Esophagus muscularis mucosa (tissue), 4 donors: ENCODE measurements at regions of chr6 and their contacts with region 1.

Region 1: DNA sequence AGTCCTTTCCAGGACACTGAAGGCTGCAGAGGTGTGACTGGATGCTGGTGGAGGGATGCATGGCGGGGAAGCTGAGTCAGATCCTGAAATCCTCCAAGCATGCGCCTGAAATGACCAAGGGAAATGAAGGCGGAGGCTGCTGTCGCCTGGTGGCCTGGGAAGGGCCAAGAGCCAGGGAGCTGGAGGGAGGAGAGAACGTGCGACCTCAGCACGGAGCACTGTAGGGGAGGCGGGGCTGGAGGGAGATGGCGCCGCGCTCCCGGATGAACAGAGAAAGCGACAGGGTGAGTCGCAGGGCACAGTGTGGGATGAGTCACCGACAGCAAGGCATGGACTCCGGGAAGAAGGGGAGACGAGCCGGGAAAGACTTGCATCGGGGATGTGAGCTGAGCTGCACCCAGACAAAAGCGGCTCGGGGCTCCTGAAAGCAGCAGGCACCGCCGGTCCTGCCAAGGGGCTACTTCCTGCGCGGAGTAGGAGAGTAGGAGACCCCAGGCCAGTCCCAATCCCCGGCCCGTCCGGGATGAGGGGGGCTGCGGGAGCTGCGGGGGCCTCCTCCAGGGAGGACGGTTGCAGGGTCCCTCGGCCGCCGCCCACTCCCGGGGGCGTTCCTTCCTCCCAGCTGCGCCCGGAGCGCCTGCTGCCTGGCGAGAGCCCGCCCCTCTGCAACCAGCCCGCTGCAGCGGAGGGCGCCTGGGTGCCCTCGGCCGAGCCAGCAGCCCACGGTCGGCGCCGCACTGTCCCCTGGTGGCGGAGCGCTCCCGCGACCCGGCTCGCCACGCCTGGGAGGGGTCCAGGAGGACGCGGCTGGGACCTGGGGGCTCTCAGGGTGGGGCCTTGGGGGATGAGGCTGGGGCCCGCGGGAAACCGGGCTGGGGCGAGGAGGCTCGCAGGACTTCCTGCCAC is 11.0 kb upstream of the NQO2 start:
- DNase-seq: peak; percentile 98
- H3K4me3 ChIP-seq: peak overlapping the region; percentile 76 to 90 (median 86)
- H3K27ac ChIP-seq: peak overlapping the region; percentile 91 to 99 (median 94)
- H3K4me1 ChIP-seq: peaks cover 19 to 40% (median 30%) of the 10 kb centered on the region in 4 donors
- H3K27me3 ChIP-seq: no peaks in the 10 kb centered on the region
- CTCF ChIP-seq: peak; percentile 94 to 99 (median 95)
- EP300 ChIP-seq: no peak
- POLR2A ChIP-seq: peak; percentile 44

Region 2: DNA sequence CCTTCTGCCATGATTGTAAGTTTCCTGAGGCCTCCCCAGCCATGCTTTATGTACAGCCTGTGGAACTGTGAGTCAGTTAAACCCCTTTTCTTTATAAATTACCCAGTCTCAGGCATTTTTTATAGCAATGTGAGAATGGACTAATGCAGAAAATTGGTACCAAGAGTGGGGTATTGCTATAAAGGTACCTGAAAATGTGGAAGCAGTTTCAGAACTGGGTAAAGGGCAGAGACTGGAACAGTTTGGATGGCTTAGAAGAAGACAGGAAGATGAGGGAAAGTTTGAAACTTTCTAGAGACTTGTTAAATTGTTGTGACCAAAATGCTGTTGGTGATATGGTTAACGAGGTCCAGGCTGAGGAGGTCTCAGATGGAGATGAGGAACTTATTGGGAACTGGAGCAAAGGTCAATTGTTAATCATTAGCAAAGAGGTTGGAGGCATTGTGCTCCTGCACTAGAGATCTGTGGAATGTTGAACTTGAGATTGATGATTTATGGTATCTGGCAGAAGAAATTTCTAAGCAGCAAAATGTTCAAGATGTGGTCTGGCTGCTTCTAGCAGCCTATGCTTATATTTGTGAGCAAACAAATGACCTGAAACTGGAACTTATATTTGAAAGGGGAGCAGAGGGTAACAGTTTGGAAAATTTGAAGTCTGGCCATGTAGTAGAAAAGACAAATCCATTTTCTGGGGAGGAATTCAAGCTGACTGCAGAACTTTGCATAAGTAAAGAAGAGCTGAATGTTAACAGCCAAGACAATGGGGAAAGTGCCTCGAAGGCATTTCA is 664.3 kb before region 1 on chr6:
- intact Hi-C with region 1: no loop called
- DNase-seq: no peak
- H3K4me3 ChIP-seq: no peak overlapping the region
- H3K27ac ChIP-seq: no peak overlapping the region
- H3K4me1 ChIP-seq: no peaks in the 10 kb centered on the region
- H3K27me3 ChIP-seq: no peaks in the 10 kb centered on the region
- CTCF ChIP-seq: no peak
- EP300 ChIP-seq: no peak
- POLR2A ChIP-seq: no peak

Region 3: GRCh38 chr6:2952557-2953095 is 36.1 kb before region 1 on chr6:
- intact Hi-C with region 1: loop called (anchors 1 kb)
- DNase-seq: peak; percentile 94
- H3K4me3 ChIP-seq: peak overlapping the region; percentile 3 to 37 (median 36)
- H3K27ac ChIP-seq: peak overlapping the region; percentile 68 to 81 (median 74)
- H3K4me1 ChIP-seq: peaks cover 31 to 39% (median 33%) of the 10 kb centered on the region in 4 donors
- H3K27me3 ChIP-seq: no peaks in the 10 kb centered on the region
- CTCF ChIP-seq: peak; percentile 97 to 99 (median 98)
- EP300 ChIP-seq: no peak
- POLR2A ChIP-seq: no peak